ENCODE measurements at regions of chr12 and their contacts with region 1.

Region 1: GRCh38 chr12:67648521-67649260 is at the start of gene DYRK2:
- DNase-seq: peak; percentile 90
- H3K4me3 ChIP-seq: peak within 1 kb of the TSS; percentile 92 to 100 (median 98)
- H3K27ac ChIP-seq: peak within 1 kb of the TSS; percentile 97 to 100 (median 98)
- H3K4me1 ChIP-seq: peaks cover 0 to 46% (median 36%) of the 10 kb centered on the region in 4 donors
- H3K27me3 ChIP-seq: no peaks in the 10 kb centered on the region
- CTCF ChIP-seq: no peak
- EP300 ChIP-seq: no peak
- POLR2A ChIP-seq: peak; percentile 39 to 65
- total RNA-seq, gene DYRK2: 17.6 to 32.4 (median 23.3) TPM

Region 2: DNA sequence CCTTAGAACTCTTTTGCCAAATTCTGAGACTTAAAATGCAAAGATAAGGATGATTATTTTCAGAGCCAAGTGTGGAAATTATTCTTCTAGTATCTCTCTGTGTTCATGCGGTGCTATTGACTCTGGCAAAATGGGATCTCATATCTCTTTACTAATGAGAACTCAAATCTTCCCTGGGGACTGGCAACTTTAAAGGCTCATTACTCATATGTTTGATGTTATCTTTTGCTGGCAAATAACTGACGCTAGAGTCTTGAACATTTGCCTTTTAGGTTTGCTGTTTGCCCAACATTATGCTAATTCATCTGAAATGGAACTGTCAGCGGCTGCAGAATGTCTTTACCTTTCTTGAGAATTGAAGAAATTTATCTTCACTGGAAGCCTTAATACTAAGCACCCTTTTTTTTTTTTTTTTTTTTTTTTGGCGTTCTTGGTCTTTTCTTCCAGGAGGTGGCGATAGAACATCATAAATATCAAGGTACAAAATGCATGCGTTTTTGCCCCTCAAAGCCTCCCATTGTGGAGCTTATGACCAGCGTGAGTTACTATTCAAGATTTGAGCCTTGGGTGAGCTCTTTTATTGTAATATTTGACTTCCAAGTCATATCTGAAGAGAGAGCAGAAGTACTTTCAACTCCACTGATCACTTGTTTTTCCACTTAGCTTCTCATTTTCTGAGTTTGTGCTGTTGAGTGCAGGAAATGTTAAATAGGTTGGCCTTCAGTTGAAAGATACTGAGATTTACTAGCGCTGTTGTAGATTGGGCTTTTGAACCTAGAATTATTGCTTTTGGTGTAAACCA is 292.9 kb before region 1 on chr12:
- intact Hi-C with region 1: loop called (anchors 5 kb)
- DNase-seq: no peak
- H3K4me3 ChIP-seq: no peak overlapping the region
- H3K27ac ChIP-seq: peak overlapping the region in 1 of 4 donors; percentile 42
- H3K4me1 ChIP-seq: peaks cover 0 to 41% (median 2%) of the 10 kb centered on the region in 4 donors
- H3K27me3 ChIP-seq: no peaks in the 10 kb centered on the region
- CTCF ChIP-seq: peak in 3 of 4 experiments; percentile 14 to 48 (median 18)
- EP300 ChIP-seq: no peak
- POLR2A ChIP-seq: no peak

Region 3: DNA sequence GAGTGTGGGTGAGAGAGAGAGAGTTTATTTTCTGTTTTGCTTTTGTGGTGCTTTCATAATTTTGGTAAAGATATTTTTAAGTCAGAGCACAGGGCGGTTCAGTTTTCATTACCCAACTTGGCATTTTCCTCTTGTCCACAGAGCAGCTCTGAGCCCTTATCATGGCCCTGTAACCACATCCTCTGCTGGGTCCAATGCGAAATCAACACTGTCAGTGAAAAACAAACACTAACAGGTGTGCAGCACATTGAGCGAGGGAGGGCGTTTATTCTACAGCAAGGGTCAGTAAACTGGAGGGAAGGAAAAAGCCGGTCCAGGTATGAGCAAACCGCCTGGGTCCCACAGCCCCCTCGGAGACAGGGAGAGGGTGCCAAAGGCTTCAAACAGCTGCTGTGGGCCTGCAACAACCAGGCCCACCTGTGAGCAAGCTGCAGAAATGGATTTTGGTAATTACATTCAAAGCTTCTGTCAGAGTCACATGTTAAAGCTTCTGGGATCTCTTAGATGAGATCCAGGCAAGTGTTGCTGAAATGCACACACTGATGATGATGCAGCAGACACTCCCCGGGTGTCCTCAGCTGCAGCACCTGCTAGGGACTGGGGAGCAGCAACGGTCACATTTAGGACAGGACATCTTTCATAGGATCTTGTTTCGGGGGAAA is 132.9 kb before region 1 on chr12:
- intact Hi-C with region 1: loop called (anchors 5 kb)
- DNase-seq: no peak
- H3K4me3 ChIP-seq: no peak overlapping the region
- H3K27ac ChIP-seq: peak overlapping the region in 1 of 4 donors; percentile 71
- H3K4me1 ChIP-seq: peaks cover 0 to 23% (median 12%) of the 10 kb centered on the region in 4 donors
- H3K27me3 ChIP-seq: no peaks in the 10 kb centered on the region
- CTCF ChIP-seq: no peak
- EP300 ChIP-seq: no peak
- POLR2A ChIP-seq: no peak

Region 4: GRCh38 chr12:67558775-67559174 is 89.9 kb before region 1 on chr12:
- intact Hi-C with region 1: no loop called
- DNase-seq: no peak
- H3K4me3 ChIP-seq: no peak overlapping the region
- H3K27ac ChIP-seq: no peak overlapping the region
- H3K4me1 ChIP-seq: no peaks in the 10 kb centered on the region
- H3K27me3 ChIP-seq: no peaks in the 10 kb centered on the region
- CTCF ChIP-seq: no peak
- EP300 ChIP-seq: no peak
- POLR2A ChIP-seq: no peak

Region 5: GRCh38 chr12:67758119-67758518 is 109.4 kb after region 1 on chr12:
- intact Hi-C with region 1: loop called (anchors 5 kb)
- DNase-seq: no peak
- H3K4me3 ChIP-seq: no peak overlapping the region
- H3K27ac ChIP-seq: no peak overlapping the region
- H3K4me1 ChIP-seq: peaks cover 0 to 22% (median 8%) of the 10 kb centered on the region in 4 donors
- H3K27me3 ChIP-seq: no peaks in the 10 kb centered on the region
- CTCF ChIP-seq: no peak
- EP300 ChIP-seq: no peak
- POLR2A ChIP-seq: no peak

Region 6: GRCh38 chr12:67943226-67943892 is 294.7 kb after region 1 on chr12:
- intact Hi-C with region 1: loop called (anchors 2 kb)
- DNase-seq: peak; percentile 80
- H3K4me3 ChIP-seq: no peak overlapping the region
- H3K27ac ChIP-seq: peak overlapping the region in 3 of 4 donors; percentile 21 to 59 (median 48)
- H3K4me1 ChIP-seq: peaks cover 0 to 41% (median 17%) of the 10 kb centered on the region in 4 donors
- H3K27me3 ChIP-seq: no peaks in the 10 kb centered on the region
- CTCF ChIP-seq: peak; percentile 30 to 78 (median 64)
- EP300 ChIP-seq: no peak
- POLR2A ChIP-seq: no peak

Region 7: DNA sequence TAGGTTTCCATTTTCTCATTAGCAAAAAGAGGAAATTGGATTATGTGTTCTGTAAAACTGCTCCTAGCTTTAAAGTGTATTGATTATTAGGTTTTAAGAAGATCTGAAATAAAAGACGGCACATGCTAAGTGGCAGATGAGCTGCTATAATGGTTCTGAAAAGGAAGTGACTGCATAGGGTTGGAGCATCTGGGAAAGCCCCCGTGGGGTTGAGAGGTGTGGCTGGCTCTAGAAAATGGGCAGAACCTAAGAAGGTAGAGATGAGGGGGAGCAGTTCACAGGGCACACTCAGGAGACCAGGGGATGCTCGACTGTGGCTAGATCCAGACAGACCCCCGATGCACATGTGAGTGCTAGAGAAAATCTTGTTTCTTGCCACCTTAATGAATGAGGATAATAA is 342.5 kb after region 1 on chr12:
- intact Hi-C with region 1: no loop called
- DNase-seq: no peak
- H3K4me3 ChIP-seq: no peak overlapping the region
- H3K27ac ChIP-seq: no peak overlapping the region
- H3K4me1 ChIP-seq: no peaks in the 10 kb centered on the region
- H3K27me3 ChIP-seq: no peaks in the 10 kb centered on the region
- CTCF ChIP-seq: no peak
- EP300 ChIP-seq: no peak
- POLR2A ChIP-seq: no peak